ENCODE measurements at regions of chr20 and their contacts with region 1.

Region 1: GRCh38 chr20:59955132-59955796 is 3.0 kb upstream of the CDH26 start:
- DNase-seq: peak; percentile 53
- ATAC-seq: peak; percentile 98
- H3K4me3 ChIP-seq: no peak overlapping the region
- H3K27ac ChIP-seq: no peak overlapping the region
- H3K4me1 ChIP-seq: no peaks in the 10 kb centered on the region
- H3K27me3 ChIP-seq: no peaks in the 10 kb centered on the region
- CTCF ChIP-seq: peak; percentile 66
- EP300 ChIP-seq: no peak
- POLR2A ChIP-seq: no peak
- RAD21 ChIP-seq: 0 out of 2 replicates have a peak, but pooled peaks have one; percentile 39

Region 2: DNA sequence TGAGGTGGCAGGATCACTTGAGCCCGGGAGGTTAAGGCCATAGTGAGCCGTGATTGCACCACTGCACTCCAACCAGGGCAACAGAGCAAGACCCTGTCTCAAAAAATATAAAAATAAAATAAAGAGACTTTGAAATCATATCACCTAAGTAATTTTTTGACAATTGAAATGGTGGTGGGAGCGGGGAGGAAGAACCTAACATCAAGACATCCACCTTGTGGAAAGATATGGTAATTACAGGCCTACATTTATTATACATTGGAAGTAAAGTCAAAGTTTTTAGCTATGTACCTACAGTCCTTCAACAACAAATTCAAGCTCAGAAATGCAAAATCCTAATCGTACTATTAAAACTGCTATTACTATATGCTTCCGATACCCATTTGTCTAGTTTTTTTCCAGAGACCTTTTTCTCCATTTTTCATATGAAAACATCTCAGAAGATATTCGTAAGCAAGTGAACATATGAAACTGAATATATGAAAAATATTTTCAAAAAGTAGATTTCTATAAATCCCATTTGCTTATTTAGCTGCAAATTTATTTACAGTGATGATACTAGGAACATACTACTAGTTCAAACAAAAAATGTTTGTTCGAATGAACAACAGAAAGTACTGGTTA is 105.1 kb before region 1 on chr20:
- CTCF ChIA-PET with region 1: no interaction called
- POLR2A ChIA-PET with region 1: no interaction called
- in situ Hi-C with region 1: no loop called
- intact Hi-C with region 1: loop called (anchors 1 kb)
- DNase-seq: peak; percentile 56
- ATAC-seq: peak; percentile 74
- H3K4me3 ChIP-seq: no peak overlapping the region
- H3K27ac ChIP-seq: no peak overlapping the region
- H3K4me1 ChIP-seq: no peaks in the 10 kb centered on the region
- H3K27me3 ChIP-seq: no peaks in the 10 kb centered on the region
- CTCF ChIP-seq: peak; percentile 57
- EP300 ChIP-seq: no peak
- POLR2A ChIP-seq: no peak
- RAD21 ChIP-seq: no peak

Region 3: DNA sequence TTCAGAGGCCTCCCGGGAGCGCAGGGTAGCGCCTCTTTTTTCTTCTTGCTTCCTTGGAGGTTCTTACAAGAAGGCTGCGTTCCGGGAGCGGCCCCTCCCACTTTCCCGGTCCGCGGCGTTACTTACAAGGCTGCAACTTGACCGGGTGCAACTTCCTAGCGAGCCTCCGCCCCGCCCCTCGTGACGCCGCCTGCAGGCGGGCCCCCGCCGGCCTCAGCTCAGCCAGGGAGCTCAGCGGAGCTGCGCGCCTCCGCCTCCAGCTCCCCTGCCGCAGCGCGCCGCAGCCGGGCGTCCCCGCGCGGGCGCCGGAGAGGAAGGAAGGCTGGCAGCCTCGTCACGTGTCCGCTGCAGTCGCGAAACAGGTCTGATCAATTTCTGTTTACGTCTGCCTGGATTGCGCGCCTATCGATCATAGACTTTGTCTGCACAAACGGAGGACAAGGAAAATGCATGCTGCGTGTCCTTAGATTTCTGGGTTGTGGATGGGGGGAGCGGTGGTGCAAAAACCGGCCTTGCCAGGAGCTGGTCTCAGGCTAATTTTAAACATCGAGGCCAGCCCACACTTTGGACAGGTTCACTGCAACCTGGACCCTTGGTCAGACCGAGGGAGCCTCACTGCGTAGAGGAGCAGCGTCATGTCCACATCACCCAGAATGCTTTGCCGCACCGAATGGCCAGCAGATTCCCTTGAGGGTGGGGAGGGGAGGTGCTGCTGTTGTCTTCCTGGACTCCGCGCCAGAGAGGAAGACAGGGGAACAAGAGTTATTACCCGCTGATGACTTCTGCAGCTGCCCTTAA is 14.9 kb before region 1 on chr20 and contains the starts of genes FAM217B and PPP1R3D:
- CTCF ChIA-PET with region 1: no interaction called
- POLR2A ChIA-PET with region 1: interaction called, 14 read pairs
- in situ Hi-C with region 1: no loop called
- intact Hi-C with region 1: no loop called
- DNase-seq: peak; percentile 93
- ATAC-seq: peak; percentile 96
- H3K4me3 ChIP-seq: peak within 1 kb of the TSS; percentile 77 to 91 (median 91)
- H3K27ac ChIP-seq: peak within 1 kb of the TSS; percentile 90
- H3K4me1 ChIP-seq: peaks cover 29% of the 10 kb centered on the region
- H3K27me3 ChIP-seq: no peaks in the 10 kb centered on the region; a peak in 1 of 5 replicates
- CTCF ChIP-seq: peak; percentile 57
- EP300 ChIP-seq: peak in 1 of 2 experiments; percentile 59; a peak in 2 of 4 replicates
- POLR2A ChIP-seq: peak; percentile 88 to 94
- RAD21 ChIP-seq: no peak; the same call in 1 of the 2 replicates
- total RNA-seq, gene FAM217B: 14.3 and 20.4 TPM in 2 replicates
- total RNA-seq, gene PPP1R3D: 3.7 and 4.0 TPM in 2 replicates